ENCODE measurements at regions of chr1 and their contacts with region 1.

Region 1: DNA sequence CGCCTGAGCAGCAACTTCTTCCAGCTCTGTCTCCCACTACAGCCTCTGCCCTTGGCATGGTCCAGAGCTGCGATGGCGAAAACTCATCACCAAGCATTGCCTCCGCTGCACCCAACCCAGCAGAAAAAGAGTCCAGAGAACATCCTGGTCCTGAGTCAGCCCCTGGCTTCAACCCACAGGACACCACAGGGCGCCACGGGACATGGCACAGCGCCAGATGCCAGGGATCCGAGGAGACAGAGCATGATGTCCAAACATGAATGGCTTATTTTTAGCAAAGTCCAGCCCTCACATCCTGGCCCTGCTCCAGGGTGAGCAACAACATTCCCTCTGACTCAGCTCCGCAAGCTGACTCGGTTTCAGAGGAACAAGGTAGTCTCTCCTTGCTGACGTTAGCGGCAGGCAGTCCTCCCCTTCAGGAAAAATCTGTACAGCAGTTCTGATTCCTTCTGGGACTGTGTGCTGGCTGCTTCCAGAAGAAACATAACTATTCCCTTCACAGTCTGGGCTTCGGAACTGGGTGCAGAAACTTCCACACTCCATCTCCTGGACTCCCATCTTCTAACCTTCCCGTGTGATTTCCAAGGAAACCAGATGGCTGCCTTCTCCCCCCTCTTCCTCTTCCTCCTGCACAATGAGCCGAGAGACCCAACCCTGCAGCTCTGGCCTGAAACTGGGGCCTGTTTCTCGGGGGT is 131.3 kb downstream of the TOMM20 start:
- DNase-seq: peak; percentile 95 to 100 (median 98)
- ATAC-seq: peak; percentile 94 to 96 (median 96)
- H3K4me3 ChIP-seq: peak overlapping the region in 7 of 12 donors; percentile 6 to 28 (median 18)
- H3K27ac ChIP-seq: peak overlapping the region; percentile 88 to 98 (median 93)
- H3K4me1 ChIP-seq: peaks cover 8 to 32% (median 26%) of the 10 kb centered on the region in 12 donors
- H3K27me3 ChIP-seq: no peaks in the 10 kb centered on the region
- CTCF ChIP-seq: peak in 1 of 12 donors; percentile 18
- POLR2A ChIP-seq: peak in 1 of 2 donors; percentile 62

Region 2: GRCh38 chr1:234400773-234401172 is 596.6 kb before region 1 on chr1:
- intact Hi-C with region 1: no loop called
- DNase-seq: no peak
- ATAC-seq: no peak
- H3K4me3 ChIP-seq: peak overlapping the region in 3 of 12 donors; percentile 5 to 27 (median 21)
- H3K27ac ChIP-seq: peak overlapping the region in 7 of 12 donors; percentile 1 to 74 (median 45)
- H3K4me1 ChIP-seq: peaks cover 0 to 44% (median 0%) of the 10 kb centered on the region in 12 donors
- H3K27me3 ChIP-seq: no peaks in the 10 kb centered on the region
- CTCF ChIP-seq: no peak
- POLR2A ChIP-seq: no peak

Region 3: GRCh38 chr1:234533975-234534876 is 463.1 kb before region 1 on chr1:
- intact Hi-C with region 1: loop called in 1 of 10 experiments (anchors 5 kb)
- DNase-seq: peak; percentile 93 to 97 (median 94)
- ATAC-seq: peak; percentile 7 to 19 (median 16)
- H3K4me3 ChIP-seq: peak overlapping the region in 1 of 12 donors; percentile 13
- H3K27ac ChIP-seq: peak overlapping the region; percentile 91 to 99 (median 98)
- H3K4me1 ChIP-seq: peaks cover 35 to 100% (median 98%) of the 10 kb centered on the region in 12 donors
- H3K27me3 ChIP-seq: no peaks in the 10 kb centered on the region
- CTCF ChIP-seq: no peak
- POLR2A ChIP-seq: no peak

Region 4: GRCh38 chr1:234851450-234852438 is 145.6 kb before region 1 on chr1:
- intact Hi-C with region 1: no loop called
- DNase-seq: peak in 1 of 5 donors; percentile 46
- ATAC-seq: peak; percentile 31 to 76 (median 44)
- H3K4me3 ChIP-seq: no peak overlapping the region
- H3K27ac ChIP-seq: peak overlapping the region in 1 of 12 donors; percentile 63
- H3K4me1 ChIP-seq: peaks cover 0 to 53% (median 0%) of the 10 kb centered on the region in 12 donors
- H3K27me3 ChIP-seq: no peaks in the 10 kb centered on the region
- CTCF ChIP-seq: no peak
- POLR2A ChIP-seq: no peak

Region 5: DNA sequence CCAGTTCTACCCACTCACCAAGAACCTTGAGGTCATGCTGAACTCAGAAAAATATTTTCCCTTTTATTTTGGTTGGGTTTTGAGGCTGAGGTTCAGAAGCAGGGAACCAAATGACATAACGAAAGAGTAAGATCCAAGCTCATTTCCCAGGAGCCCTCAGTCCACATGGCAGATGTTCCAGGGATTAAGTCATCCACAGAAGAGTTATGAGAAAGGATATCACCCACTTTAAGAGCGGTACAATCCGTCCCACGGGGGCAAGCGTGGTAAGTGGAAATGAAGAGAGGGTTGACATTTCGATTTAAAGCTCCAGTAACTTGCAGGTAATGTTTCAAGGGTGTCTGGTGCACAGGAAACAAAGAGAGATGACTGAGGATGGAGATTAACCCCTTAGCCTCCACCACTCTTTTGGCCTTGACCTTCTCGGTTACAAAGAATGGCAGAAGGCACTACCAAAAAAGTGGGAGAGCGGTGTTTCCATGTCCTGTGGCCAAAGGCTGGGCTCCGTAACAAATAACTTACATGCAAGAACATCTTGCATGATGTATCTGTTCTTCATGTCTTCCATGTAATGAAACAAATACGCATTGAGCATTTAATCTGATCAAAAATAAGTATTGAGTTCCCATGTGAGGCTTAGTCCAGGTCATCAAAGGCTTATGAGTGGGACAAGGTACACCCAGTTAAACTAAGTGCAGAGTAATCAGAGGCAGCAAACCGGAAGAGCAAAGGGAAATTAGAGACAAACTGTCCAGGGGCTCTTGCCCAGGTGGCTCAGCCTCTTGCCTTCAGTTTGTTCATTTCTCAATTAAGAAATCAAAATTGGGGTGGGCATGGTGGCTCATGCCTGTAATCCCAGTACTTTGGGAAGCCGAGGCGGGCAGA is 110.1 kb before region 1 on chr1:
- intact Hi-C with region 1: loop called in 1 of 10 experiments (anchors 5 kb)
- DNase-seq: peak in 4 of 5 donors; percentile 65 to 84 (median 74)
- ATAC-seq: peak; percentile 74 to 87 (median 78)
- H3K4me3 ChIP-seq: peak overlapping the region in 2 of 12 donors; percentile 1 to 6
- H3K27ac ChIP-seq: peak overlapping the region; percentile 85 to 97 (median 94)
- H3K4me1 ChIP-seq: peaks cover 0 to 43% (median 26%) of the 10 kb centered on the region in 12 donors
- H3K27me3 ChIP-seq: no peaks in the 10 kb centered on the region
- CTCF ChIP-seq: no peak
- POLR2A ChIP-seq: no peak

Region 6: GRCh38 chr1:235045034-235045720 is 47.8 kb after region 1 on chr1:
- intact Hi-C with region 1: loop called in 2 of 10 experiments (anchors 5 to 10 kb)
- DNase-seq: no peak
- ATAC-seq: no peak
- H3K4me3 ChIP-seq: no peak overlapping the region
- H3K27ac ChIP-seq: peak overlapping the region in 1 of 12 donors; percentile 89
- H3K4me1 ChIP-seq: peaks cover 5 to 50% (median 21%) of the 10 kb centered on the region in 12 donors
- H3K27me3 ChIP-seq: no peaks in the 10 kb centered on the region
- CTCF ChIP-seq: no peak
- POLR2A ChIP-seq: no peak

Region 7: GRCh38 chr1:235067263-235068172 is 70.2 kb after region 1 on chr1:
- intact Hi-C with region 1: loop called in 3 of 10 experiments (anchors 5 kb)
- DNase-seq: peak; percentile 68 to 89 (median 78)
- ATAC-seq: peak; percentile 57 to 91 (median 80)
- H3K4me3 ChIP-seq: no peak overlapping the region
- H3K27ac ChIP-seq: peak overlapping the region in 10 of 12 donors; percentile 0 to 78 (median 54)
- H3K4me1 ChIP-seq: peaks cover 6 to 50% (median 37%) of the 10 kb centered on the region in 12 donors
- H3K27me3 ChIP-seq: no peaks in the 10 kb centered on the region
- CTCF ChIP-seq: no peak
- POLR2A ChIP-seq: no peak